ENCODE measurements at regions of chr2 and their contacts with region 1.

Region 1: DNA sequence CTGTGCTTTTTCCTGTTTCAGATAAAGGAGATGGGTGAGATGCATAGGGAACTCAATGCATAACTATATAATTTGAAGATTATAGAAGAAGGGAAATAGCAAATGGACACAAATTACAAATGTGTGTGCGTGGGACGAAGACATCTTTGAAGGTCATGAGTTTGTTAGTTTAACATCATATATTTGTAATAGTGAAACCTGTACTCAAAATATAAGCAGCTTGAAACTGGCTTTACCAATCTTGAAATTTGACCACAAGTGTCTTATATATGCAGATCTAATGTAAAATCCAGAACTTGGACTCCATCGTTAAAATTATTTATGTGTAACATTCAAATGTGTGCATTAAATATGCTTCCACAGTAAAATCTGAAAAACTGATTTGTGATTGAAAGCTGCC is 16.4 kb upstream of the MSH2 start:
- DNase-seq: no peak
- ATAC-seq: no peak
- H3K4me3 Mint-ChIP-seq: no peak overlapping the region
- H3K27ac Mint-ChIP-seq: no peak overlapping the region
- H3K4me1 Mint-ChIP-seq: no peaks in the 10 kb centered on the region
- H3K27me3 Mint-ChIP-seq: peaks cover 3% of the 10 kb centered on the region
- CTCF ChIP-seq: no peak

Region 2: DNA sequence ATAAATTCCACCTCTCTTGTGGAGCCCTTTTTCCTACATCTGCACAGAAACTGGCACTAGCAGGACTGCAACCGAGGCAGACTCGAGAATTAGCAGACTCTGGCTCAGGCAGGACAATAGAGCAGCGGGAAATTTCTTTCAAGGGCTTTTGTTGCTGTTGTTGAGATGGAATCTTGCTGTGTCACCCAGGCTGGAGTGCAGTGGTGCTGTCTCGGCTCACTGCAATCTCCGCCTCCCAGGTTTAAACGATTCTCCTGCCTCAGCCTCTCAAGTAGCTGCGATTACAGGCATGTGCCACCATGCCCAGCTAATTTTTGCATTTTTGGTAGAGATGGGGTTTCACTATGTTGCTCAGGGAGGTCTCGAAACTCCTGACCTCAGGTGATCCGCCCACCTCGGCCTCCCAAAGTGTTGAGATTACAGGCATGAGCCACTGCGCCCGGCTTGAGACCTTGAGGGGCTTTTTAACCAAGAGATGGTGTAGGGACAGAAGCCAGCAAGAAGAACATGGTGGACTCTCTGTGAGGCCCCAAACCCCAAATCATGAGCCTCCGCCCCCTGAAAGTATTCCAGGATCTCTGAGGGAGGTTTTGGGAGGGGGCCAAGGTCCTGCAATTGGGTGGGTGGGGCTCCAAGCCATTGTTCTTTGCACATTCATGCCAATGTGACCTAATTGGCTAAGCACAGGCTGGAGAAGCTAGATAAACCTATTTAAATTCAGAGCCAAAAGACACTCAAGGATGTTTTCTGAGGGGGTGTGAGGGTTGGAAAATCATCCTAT is 52.0 kb before region 1 on chr2:
- CTCF ChIA-PET with region 1: interaction called, 77 read pairs
- POLR2A ChIA-PET with region 1: no interaction called
- intact Hi-C with region 1: loop called (anchors 1 kb)
- DNase-seq: no peak
- ATAC-seq: no peak
- H3K4me3 Mint-ChIP-seq: no peak overlapping the region
- H3K27ac Mint-ChIP-seq: no peak overlapping the region
- H3K4me1 Mint-ChIP-seq: no peaks in the 10 kb centered on the region
- H3K27me3 Mint-ChIP-seq: peaks cover 2% of the 10 kb centered on the region
- CTCF ChIP-seq: no peak

Region 3: DNA sequence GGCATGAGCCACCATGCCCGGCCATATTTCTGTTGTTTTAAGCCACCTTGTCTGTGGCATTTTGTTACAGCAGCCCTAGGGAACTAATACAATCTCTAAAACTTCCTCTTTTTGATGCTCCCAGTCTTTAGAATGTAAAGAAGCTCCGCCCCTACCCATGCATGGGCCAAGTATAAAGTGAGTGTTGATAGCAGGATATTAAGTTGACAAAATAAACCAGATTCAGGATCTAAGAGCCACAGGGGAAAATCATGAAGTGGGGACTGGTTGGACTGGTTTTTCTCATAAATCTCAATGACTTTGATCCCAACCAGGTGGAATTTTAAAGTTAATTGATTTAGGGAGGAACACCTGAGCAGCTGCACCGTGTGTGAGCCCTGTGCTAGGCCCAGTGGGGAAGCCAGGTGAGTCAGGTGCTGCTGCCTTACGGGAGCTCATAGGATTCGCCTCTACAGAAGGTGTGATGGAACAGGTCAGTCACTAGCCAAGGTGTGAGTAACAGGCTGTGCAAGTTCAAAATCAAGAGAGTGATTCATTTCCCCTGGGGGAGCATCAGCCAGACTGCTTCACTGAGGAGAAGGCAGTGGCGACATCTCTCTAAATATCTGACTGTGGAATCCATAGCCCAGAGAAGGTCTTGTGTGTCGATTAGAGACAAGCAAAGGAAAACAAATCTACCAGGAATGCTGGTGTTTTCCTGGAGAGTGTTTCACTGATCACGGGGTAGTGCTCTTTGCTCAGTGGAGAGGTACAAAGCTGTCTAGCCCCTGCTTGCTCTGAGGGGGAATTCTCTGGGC is 46.6 kb before region 1 on chr2:
- CTCF ChIA-PET with region 1: interaction called, 77 read pairs
- POLR2A ChIA-PET with region 1: no interaction called
- intact Hi-C with region 1: loop called (anchors 1 kb)
- DNase-seq: peak; percentile 23
- ATAC-seq: peak; percentile 74
- H3K4me3 Mint-ChIP-seq: no peak overlapping the region
- H3K27ac Mint-ChIP-seq: no peak overlapping the region
- H3K4me1 Mint-ChIP-seq: peaks cover 2% of the 10 kb centered on the region
- H3K27me3 Mint-ChIP-seq: peaks cover 8% of the 10 kb centered on the region
- CTCF ChIP-seq: no peak